Heart left ventricle (tissue), 16 donors: ENCODE measurements at regions of chr16 and their contacts with region 1.

Region 1: DNA sequence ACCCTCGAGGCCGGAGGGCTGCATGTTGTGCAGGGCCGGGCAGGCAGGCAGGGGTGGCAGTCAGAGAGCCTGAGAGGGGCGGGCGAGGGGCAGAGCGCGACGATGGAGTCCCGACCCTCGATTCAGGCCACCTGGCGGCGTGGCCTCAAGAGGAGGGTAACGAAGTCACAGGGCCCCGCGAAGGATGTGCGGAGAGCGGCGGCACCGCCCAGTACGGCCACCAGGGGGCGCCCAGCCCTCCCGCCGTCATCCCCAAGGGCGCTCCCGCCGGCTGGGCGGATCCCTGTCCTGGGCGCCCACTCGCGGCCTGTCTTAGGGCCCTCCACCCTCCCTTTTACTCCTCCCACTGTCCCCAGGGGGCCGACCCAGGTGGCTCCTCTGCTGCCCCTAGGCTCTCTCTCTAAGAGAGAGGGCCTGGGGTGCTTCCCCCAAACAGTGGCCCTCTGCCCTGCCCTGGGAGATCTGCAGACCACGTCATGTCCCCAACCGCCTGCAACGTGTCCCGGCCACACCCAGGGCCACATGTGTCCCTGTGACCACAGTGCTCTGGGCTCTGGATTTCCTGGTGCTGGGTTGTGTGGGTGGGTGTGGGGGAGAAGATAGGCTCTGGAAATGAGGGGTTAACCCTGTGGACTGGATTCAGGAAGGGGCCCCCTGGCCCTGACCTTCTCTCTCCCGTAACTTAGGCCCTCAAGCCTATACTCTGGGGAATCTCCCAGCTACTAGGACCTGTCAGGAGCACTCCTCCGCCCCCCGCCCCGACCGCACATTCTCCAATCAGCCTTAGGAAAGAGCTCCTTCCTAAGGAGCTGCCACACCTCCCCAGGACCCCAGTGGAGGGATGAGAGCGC is 5.9 kb downstream of the DPEP2 start:
- DNase-seq: peak; percentile 83 to 92 (median 88)
- ATAC-seq: peak; percentile 90 to 95 (median 94)
- H3K4me3 ChIP-seq: peak overlapping the region in 10 of 12 donors; percentile 3 to 54 (median 47)
- H3K27ac ChIP-seq: peak overlapping the region; percentile 43 to 88 (median 81)
- H3K4me1 ChIP-seq: peaks cover 0 to 36% (median 9%) of the 10 kb centered on the region in 12 donors
- H3K27me3 ChIP-seq: no peaks in the 10 kb centered on the region
- CTCF ChIP-seq: peak; percentile 97 to 100 (median 100)
- POLR2A ChIP-seq: peak in 1 of 2 donors; percentile 29

Region 2: GRCh38 chr16:67822511-67822910 is 170.9 kb before region 1 on chr16:
- intact Hi-C with region 1: no loop called
- DNase-seq: no peak
- ATAC-seq: no peak
- H3K4me3 ChIP-seq: no peak overlapping the region
- H3K27ac ChIP-seq: no peak overlapping the region
- H3K4me1 ChIP-seq: no peaks in the 10 kb centered on the region
- H3K27me3 ChIP-seq: no peaks in the 10 kb centered on the region
- CTCF ChIP-seq: no peak
- POLR2A ChIP-seq: no peak

Region 3: DNA sequence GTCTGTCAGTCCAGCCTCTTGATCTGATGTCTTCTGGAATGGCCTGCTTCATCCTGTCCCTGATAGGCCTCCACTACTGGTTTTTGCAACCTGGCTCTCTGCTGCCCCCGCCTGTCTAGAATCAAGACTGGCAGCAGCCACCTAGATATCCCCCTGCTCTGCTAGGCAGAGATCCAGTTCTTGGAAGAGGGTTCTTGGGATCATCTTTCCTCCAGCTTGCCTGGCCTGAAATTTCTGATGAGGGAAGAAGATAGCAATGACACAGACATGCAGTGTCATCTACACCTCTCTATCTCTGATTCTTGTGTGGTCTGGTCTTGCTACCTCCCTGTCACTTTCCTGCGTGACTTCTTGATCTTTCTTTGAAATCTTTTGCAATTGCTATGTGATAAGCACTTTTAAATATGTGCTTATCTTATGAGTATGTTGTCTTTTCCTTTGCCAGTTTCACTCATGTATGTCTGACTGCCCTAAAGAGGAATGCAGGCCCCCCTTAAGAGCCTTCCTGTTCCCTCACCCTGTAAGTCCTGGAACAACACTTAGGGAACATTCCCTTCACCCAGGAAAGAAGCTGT is 71.5 kb after region 1 on chr16:
- intact Hi-C with region 1: loop called in 1 of 10 experiments (anchors 5 kb)
- DNase-seq: peak; percentile 59 to 82 (median 75)
- ATAC-seq: peak; percentile 49 to 80 (median 78)
- H3K4me3 ChIP-seq: no peak overlapping the region
- H3K27ac ChIP-seq: peak overlapping the region in 10 of 12 donors; percentile 5 to 76 (median 32)
- H3K4me1 ChIP-seq: peaks cover 0 to 49% (median 19%) of the 10 kb centered on the region in 12 donors
- H3K27me3 ChIP-seq: no peaks in the 10 kb centered on the region
- CTCF ChIP-seq: peak; percentile 67 to 87 (median 79)
- POLR2A ChIP-seq: no peak